ENCODE measurements at regions of chr3 and their contacts with region 1.

Region 1: GRCh38 chr3:17032407-17033034 is 147.8 kb downstream of the PLCL2 start:
- DNase-seq: peak; percentile 19
- H3K4me3 Mint-ChIP-seq: no peak overlapping the region
- H3K27ac Mint-ChIP-seq: peak overlapping the region; percentile 6
- H3K4me1 Mint-ChIP-seq: peaks cover 9% of the 10 kb centered on the region
- H3K27me3 Mint-ChIP-seq: no peaks in the 10 kb centered on the region
- CTCF ChIP-seq: peak; percentile 43

Region 2: GRCh38 chr3:16828815-16829214 is 203.7 kb before region 1 on chr3:
- CTCF ChIA-PET with region 1: no interaction called
- intact Hi-C with region 1: loop called (anchors 2 kb)
- DNase-seq: peak; percentile 47
- H3K4me3 Mint-ChIP-seq: no peak overlapping the region
- H3K27ac Mint-ChIP-seq: no peak overlapping the region
- H3K4me1 Mint-ChIP-seq: no peaks in the 10 kb centered on the region
- H3K27me3 Mint-ChIP-seq: no peaks in the 10 kb centered on the region
- CTCF ChIP-seq: no peak

Region 3: DNA sequence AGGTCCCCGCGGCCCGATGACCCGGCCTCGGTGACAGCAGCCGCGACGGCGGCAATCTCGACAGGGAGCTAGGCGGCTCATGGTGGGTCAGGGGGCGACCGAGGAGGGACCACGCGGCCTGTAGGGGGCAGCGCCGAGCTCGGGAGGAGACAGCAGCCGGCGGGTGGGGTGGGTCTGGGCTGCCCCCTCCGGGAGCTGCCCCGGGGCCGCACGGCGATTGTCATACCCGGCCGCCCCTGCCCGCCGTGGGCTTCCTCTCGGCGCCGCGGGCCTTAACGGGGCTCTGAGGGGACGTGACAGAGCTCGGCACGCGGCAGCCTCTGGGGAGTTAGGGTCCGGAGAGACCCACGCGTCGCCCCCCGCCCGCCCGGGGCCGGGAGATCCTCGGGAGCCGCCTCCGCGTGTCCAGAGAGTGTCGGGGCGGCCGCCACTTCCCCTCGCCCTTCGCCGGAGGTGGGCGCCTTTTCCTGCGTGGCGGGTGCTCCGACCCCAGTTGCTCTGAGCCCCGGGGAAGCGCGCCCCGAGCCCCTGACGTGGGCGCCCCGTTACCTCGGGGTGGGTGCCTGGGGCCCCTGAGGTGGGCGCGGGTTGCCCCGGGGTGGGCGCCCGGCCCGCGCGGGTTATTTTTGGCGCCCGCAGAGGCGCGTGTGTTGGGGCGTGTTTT is 148.3 kb before region 1 on chr3:
- CTCF ChIA-PET with region 1: interaction called, 3 read pairs
- intact Hi-C with region 1: loop called (anchors 5 kb)
- DNase-seq: peak; percentile 83
- H3K4me3 Mint-ChIP-seq: peak overlapping the region; percentile 79
- H3K27ac Mint-ChIP-seq: peak overlapping the region; percentile 31
- H3K4me1 Mint-ChIP-seq: peaks cover 15% of the 10 kb centered on the region
- H3K27me3 Mint-ChIP-seq: no peaks in the 10 kb centered on the region
- CTCF ChIP-seq: no peak

Region 4: GRCh38 chr3:16912400-16913263 is 119.9 kb before region 1 on chr3:
- CTCF ChIA-PET with region 1: no interaction called
- intact Hi-C with region 1: loop called (anchors 10 kb)
- DNase-seq: no peak
- H3K4me3 Mint-ChIP-seq: no peak overlapping the region
- H3K27ac Mint-ChIP-seq: no peak overlapping the region
- H3K4me1 Mint-ChIP-seq: peaks cover 7% of the 10 kb centered on the region
- H3K27me3 Mint-ChIP-seq: no peaks in the 10 kb centered on the region
- CTCF ChIP-seq: no peak

Measured in Calu3 (cell line).